HEK293 (cell line): ENCODE measurements at regions of chr12 and their contacts with region 1.

Region 1: GRCh38 chr12:95942524-95943329 is at the start of gene CCDC38:
- H3K4me3 ChIP-seq: peak within 1 kb of the TSS; percentile 66
- H3K27ac ChIP-seq: peak within 1 kb of the TSS; percentile 77
- H3K4me1 ChIP-seq: peaks cover 3% of the 10 kb centered on the region; the same call in 1 of the 2 replicates
- CTCF ChIP-seq: no peak

Region 2: DNA sequence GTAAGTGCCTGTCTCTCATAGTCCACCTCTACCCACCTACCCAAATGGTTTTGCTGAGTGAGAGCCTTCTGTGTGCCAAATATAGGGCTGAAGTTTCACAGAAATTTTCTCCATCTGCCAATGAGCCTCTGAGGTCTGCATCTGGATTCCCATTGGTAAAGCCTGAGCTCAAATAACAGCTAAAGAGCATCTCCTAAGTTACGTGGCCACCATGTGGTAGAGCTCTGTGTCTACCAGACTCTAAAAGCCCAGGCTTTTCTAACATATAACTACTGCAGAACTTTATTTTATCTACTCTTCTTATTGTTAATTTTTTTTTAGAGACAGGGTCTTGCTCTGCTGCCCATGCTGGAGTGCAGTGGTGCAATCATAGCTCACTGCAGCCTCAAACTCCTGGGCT is 16.4 kb after region 1 on chr12:
- CTCF ChIA-PET with region 1: interaction called, 17 read pairs
- POLR2A ChIA-PET with region 1: interaction called, 3 read pairs
- H3K4me3 ChIP-seq: no peak overlapping the region
- H3K27ac ChIP-seq: no peak overlapping the region
- H3K4me1 ChIP-seq: no peaks in the 10 kb centered on the region
- CTCF ChIP-seq: no peak